AG04449 (cell line): ENCODE measurements at regions of chr1 and their contacts with region 1.

Region 1: GRCh38 chr1:150259758-150260669 is 2.4 kb downstream of the CA14 start:
- DNase-seq: no peak
- H3K4me3 ChIP-seq: no peak overlapping the region
- CTCF ChIP-seq: no peak

Region 2: DNA sequence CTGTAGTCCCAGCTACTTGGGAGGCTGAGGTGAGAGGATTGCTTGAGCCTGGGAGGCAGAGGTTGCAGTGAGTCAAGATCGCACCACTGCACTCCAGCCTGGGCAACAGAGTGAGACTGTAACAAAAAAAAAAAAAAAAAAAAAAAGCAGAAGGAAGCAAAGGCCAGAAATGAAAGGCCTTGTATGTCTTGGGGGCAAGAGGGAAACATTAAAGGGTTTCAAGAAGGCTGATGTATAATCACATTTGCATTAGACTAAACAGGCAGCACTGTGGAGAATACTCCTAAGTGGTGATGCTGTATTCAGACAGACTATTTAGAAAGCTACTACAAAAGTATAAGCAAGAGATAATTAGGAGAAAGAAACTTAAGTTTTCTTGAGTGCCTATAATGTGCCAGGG is 34.5 kb before region 1 on chr1:
- CTCF ChIA-PET with region 1: no interaction called
- POLR2A ChIA-PET with region 1: no interaction called
- DNase-seq: no peak
- H3K4me3 ChIP-seq: no peak overlapping the region
- CTCF ChIP-seq: no peak

Region 3: GRCh38 chr1:150235852-150236613 is 24.0 kb before region 1 on chr1 and contains the start of gene ANP32E:
- CTCF ChIA-PET with region 1: interaction called, 16 read pairs
- POLR2A ChIA-PET with region 1: no interaction called
- DNase-seq: peak; percentile 98
- H3K4me3 ChIP-seq: peak within 1 kb of the TSS; percentile 89
- CTCF ChIP-seq: no peak

Region 4: GRCh38 chr1:150281837-150282653 is 22.0 kb after region 1 on chr1 and contains the start of gene CIART:
- CTCF ChIA-PET with region 1: interaction called, 623 read pairs
- POLR2A ChIA-PET with region 1: interaction called, 11 read pairs
- DNase-seq: peak; percentile 96
- H3K4me3 ChIP-seq: peak within 1 kb of the TSS; percentile 91
- CTCF ChIP-seq: no peak

Region 5: DNA sequence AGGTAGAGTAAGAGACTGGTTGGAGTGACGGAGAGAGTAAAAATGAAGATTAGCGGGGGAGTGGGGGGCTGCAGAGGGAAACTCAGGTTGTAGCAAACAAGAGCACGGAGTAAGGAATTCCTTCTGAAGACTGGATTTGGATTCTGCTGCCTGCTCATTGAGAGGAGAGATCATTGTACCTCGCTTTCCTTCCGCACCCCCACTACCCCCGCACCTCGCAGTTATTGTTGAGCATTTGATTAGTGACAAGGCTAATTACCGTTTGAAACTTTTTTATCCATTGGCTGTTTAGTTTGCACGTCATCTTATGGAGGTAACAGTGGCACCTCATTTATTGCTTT is 61.8 kb after region 1 on chr1:
- CTCF ChIA-PET with region 1: interaction called, 20 read pairs
- POLR2A ChIA-PET with region 1: no interaction called
- DNase-seq: no peak
- H3K4me3 ChIP-seq: peak overlapping the region; percentile 97
- CTCF ChIP-seq: no peak

Region 6: GRCh38 chr1:150529017-150529416 is 269.0 kb after region 1 on chr1:
- CTCF ChIA-PET with region 1: interaction called, 11 read pairs
- POLR2A ChIA-PET with region 1: no interaction called
- DNase-seq: no peak
- H3K4me3 ChIP-seq: no peak overlapping the region
- CTCF ChIP-seq: no peak